Psoas muscle (tissue), 8 donors: ENCODE measurements at regions of chr22 and their contacts with region 1.

Region 1: GRCh38 chr22:24423519-24424000 is 3.8 kb upstream of the ADORA2A start:
- DNase-seq: peak; percentile 66 to 79
- ATAC-seq: peak; percentile 74 to 81 (median 80)
- H3K4me3 ChIP-seq: peak overlapping the region; percentile 68
- H3K27ac ChIP-seq: peak overlapping the region; percentile 30
- H3K4me1 ChIP-seq: peaks cover 16% of the 10 kb centered on the region
- H3K27me3 ChIP-seq: peaks cover 0 to 10% (median 4%) of the 10 kb centered on the region in 3 donors
- CTCF ChIP-seq: peak; percentile 91

Region 2: GRCh38 chr22:24503137-24503842 is 79.7 kb after region 1 on chr22:
- intact Hi-C with region 1: loop called (anchors 5 kb)
- DNase-seq: peak; percentile 52 to 74
- ATAC-seq: peak; percentile 66 to 79 (median 76)
- H3K4me3 ChIP-seq: no peak overlapping the region
- H3K27ac ChIP-seq: no peak overlapping the region
- H3K4me1 ChIP-seq: peaks cover 14% of the 10 kb centered on the region
- H3K27me3 ChIP-seq: no peaks in the 10 kb centered on the region
- CTCF ChIP-seq: peak; percentile 60

Region 3: GRCh38 chr22:24525416-24526037 is 102.0 kb after region 1 on chr22:
- intact Hi-C with region 1: loop called (anchors 2 kb)
- DNase-seq: peak; percentile 78 to 86
- ATAC-seq: peak; percentile 77 to 88 (median 82)
- H3K4me3 ChIP-seq: no peak overlapping the region
- H3K27ac ChIP-seq: no peak overlapping the region
- H3K4me1 ChIP-seq: no peaks in the 10 kb centered on the region
- H3K27me3 ChIP-seq: no peaks in the 10 kb centered on the region
- CTCF ChIP-seq: peak; percentile 84

Region 4: GRCh38 chr22:24758164-24758799 is 334.7 kb after region 1 on chr22:
- intact Hi-C with region 1: loop called (anchors 5 to 10 kb)
- DNase-seq: peak in 1 of 2 donors; percentile 43
- ATAC-seq: no peak
- H3K4me3 ChIP-seq: no peak overlapping the region
- H3K27ac ChIP-seq: no peak overlapping the region
- H3K4me1 ChIP-seq: no peaks in the 10 kb centered on the region
- H3K27me3 ChIP-seq: peaks cover 0 to 5% (median 0%) of the 10 kb centered on the region in 3 donors
- CTCF ChIP-seq: peak; percentile 89